GM12878 (cell line): ENCODE measurements at regions of chr18 and their contacts with region 1.

Region 1: DNA sequence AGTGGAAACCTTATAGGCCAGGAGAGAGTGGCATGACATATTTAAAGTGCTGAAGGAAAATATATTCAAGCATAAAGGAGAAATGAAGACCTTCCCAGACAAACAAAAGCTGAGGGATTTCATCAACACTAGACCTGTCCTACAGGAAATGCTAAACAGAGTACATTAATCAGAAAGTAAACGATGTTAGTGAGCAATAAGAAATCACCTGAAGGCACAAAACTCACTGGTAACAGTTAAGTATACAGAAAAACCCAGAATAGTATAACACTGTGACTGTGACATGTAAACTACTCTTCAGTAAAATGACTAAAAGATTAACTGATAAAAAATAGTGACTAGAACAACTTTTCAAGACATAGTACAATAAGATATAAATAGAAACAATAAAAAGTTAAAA is 87.4 kb downstream of the ATP8B1 start:
- DNase-seq: no peak
- ATAC-seq: no peak
- H3K4me3 ChIP-seq: no peak overlapping the region
- H3K27ac ChIP-seq: no peak overlapping the region
- H3K4me1 ChIP-seq: no peaks in the 10 kb centered on the region
- H3K27me3 ChIP-seq: no peaks in the 10 kb centered on the region
- CTCF ChIP-seq: no peak
- EP300 ChIP-seq: no peak
- POLR2A ChIP-seq: no peak
- RAD21 ChIP-seq: no peak

Region 2: GRCh38 chr18:57730146-57730545 is 14.5 kb after region 1 on chr18:
- CTCF ChIA-PET with region 1: no interaction called
- POLR2A ChIA-PET with region 1: interaction called, 10 read pairs
- RAD21 ChIA-PET with region 1: no interaction called
- SMC1A ChIA-PET with region 1: no interaction called
- in situ Hi-C with region 1: no loop called
- intact Hi-C with region 1: no loop called
- DNase-seq: no peak
- ATAC-seq: no peak
- H3K4me3 ChIP-seq: no peak overlapping the region
- H3K27ac ChIP-seq: no peak overlapping the region
- H3K4me1 ChIP-seq: no peaks in the 10 kb centered on the region
- H3K27me3 ChIP-seq: no peaks in the 10 kb centered on the region
- CTCF ChIP-seq: no peak
- EP300 ChIP-seq: no peak
- POLR2A ChIP-seq: no peak
- RAD21 ChIP-seq: no peak